Activated CD4-positive, alpha-beta memory T cell treated with anti-CD3 and anti-CD28 coated beads for 36 hours (primary cell): ENCODE measurements at regions of chr10 and their contacts with region 1.

Region 1: DNA sequence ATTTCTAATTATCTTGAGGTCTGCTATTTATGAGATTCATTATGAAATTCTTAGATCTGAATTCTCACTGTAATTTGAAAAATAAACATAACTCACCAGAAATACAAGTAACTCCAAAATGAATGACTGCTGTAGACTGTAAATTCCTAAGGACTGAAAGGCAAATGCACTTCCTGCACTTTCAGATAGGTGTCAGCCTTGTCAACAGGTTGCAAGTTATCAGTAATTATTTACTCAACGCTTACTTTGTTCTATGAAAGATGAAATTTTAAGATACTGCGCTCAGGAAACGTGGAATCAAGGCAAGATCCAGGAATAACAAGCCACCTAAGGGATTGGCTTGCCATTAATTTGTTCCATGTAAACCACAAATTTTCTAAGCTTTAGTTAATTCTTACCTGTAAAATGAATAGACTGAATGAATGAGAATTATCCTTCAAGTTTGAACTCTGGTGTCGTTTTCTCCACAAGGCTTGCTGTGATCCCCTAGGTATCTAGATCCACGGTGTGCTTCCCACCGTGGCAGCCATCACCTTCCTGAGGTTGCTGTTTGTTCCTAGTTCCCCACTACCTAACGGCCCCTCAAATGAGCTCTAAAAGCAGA is 12.6 kb downstream of the DHX32 start:
- DNase-seq: no peak
- H3K4me3 Mint-ChIP-seq: no peak overlapping the region
- H3K27ac Mint-ChIP-seq: no peak overlapping the region
- H3K4me1 Mint-ChIP-seq: no peaks in the 10 kb centered on the region
- H3K27me3 Mint-ChIP-seq: no peaks in the 10 kb centered on the region

Region 2: DNA sequence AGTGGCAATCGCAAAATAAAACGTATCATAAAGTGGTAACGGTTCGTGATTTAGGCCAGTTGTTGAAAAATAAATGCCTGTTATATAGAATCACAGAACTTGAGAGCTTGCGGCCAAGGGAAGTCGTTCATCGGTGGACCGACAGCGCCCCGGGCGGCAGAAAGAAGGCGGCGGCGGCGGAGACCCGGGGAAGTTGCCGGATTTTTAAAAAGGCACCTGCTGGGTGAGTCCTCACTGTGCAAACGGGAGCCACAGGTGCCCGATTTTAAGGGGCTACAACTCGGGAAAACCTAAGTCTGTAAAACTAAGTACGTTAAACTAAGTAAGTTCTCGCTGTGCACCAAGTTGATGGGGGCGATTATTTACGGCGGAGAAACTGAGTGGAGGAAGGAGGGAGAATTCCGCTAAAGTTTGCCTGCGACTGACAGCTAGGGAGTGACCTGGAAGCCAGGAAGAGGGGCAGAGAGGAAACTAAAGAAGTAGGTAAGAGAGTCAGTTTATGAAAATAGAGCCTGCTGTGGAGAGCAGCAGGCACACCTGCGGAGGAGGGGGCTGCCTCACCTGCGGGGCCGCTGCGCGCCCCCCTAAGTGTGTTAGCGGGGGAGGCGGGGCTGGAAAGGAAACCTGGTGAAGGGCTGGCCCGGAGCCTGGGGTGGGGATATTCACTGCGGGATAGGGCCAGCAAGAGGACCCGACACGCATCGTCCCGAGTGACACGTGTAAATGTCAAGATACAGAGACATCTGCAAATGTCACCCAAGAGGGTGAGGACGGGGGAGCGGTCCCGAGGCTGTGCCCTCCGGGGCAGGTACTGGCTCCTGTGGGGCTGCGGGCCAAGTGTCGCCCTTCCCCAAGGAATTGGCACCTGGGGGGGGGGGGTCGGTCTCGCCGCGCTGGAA is 518.8 kb after region 1 on chr10:
- CTCF ChIA-PET with region 1: no interaction called
- POLR2A ChIA-PET with region 1: no interaction called
- intact Hi-C with region 1: loop called (anchors 5 kb)
- DNase-seq: peak; percentile 49
- H3K4me3 Mint-ChIP-seq: peak overlapping the region; percentile 32
- H3K27ac Mint-ChIP-seq: peak overlapping the region; percentile 34
- H3K4me1 Mint-ChIP-seq: peaks cover 5% of the 10 kb centered on the region
- H3K27me3 Mint-ChIP-seq: peaks cover 29% of the 10 kb centered on the region